MCF 10A (cell line): ENCODE measurements at regions of chr1 and their contacts with region 1.

Region 1: GRCh38 chr1:32107742-32108661 is at the start of gene KPNA6:
- DNase-seq: peak; percentile 98
- H3K4me3 Mint-ChIP-seq: peak within 1 kb of the TSS; percentile 98
- H3K27ac Mint-ChIP-seq: peak within 1 kb of the TSS; percentile 97
- H3K4me1 Mint-ChIP-seq: peaks cover 11% of the 10 kb centered on the region
- H3K27me3 Mint-ChIP-seq: no peaks in the 10 kb centered on the region
- CTCF ChIP-seq: no peak
- total RNA-seq, gene KPNA6: 86.9 and 109 TPM in 2 replicates

Region 2: GRCh38 chr1:32013386-32014198 is 94.4 kb before region 1 on chr1 and contains the start of gene KHDRBS1:
- CTCF ChIA-PET with region 1: no interaction called
- POLR2A ChIA-PET with region 1: interaction called, 19 read pairs
- intact Hi-C with region 1: no loop called
- DNase-seq: peak; percentile 97
- H3K4me3 Mint-ChIP-seq: peak within 1 kb of the TSS; percentile 98
- H3K27ac Mint-ChIP-seq: peak within 1 kb of the TSS; percentile 95
- H3K4me1 Mint-ChIP-seq: peaks cover 26% of the 10 kb centered on the region
- H3K27me3 Mint-ChIP-seq: no peaks in the 10 kb centered on the region
- CTCF ChIP-seq: no peak
- total RNA-seq, gene KHDRBS1: 106 and 107 TPM in 2 replicates

Region 3: DNA sequence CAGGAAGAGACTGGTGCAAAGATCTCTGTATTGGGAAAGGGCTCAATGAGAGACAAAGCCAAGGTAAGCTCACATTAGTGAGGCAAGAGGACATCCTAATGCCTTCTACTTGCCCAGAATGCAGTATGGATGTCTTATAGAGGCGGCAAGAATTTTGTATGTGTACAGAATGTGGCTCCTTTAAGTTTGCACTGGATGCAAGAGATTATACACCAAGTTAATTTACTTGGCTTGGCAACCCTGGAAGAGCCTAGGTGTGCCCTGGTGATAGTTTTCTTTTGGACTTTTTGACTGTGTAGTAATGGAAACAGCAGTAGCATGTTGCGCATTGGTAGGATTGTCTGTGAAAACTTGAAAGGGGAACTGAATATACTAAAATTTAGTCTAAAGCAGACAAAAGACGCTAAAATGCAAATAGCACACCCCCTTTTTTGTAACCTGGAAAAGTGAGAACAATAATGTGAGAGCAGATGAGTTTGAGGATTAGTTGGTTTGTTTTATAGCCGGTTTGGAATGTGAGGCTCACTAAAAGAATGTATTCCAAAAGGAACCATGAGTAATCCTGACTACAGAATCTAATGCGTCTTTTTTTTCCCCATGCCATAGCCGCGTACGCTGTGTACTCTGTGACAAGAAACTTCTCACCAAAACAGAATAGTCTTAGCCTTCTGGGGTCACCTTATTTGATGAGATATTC is 76.3 kb before region 1 on chr1:
- CTCF ChIA-PET with region 1: no interaction called
- POLR2A ChIA-PET with region 1: no interaction called
- intact Hi-C with region 1: no loop called
- DNase-seq: no peak
- H3K4me3 Mint-ChIP-seq: no peak overlapping the region
- H3K27ac Mint-ChIP-seq: no peak overlapping the region
- H3K4me1 Mint-ChIP-seq: peaks cover 25% of the 10 kb centered on the region
- H3K27me3 Mint-ChIP-seq: no peaks in the 10 kb centered on the region
- CTCF ChIP-seq: no peak

Region 4: DNA sequence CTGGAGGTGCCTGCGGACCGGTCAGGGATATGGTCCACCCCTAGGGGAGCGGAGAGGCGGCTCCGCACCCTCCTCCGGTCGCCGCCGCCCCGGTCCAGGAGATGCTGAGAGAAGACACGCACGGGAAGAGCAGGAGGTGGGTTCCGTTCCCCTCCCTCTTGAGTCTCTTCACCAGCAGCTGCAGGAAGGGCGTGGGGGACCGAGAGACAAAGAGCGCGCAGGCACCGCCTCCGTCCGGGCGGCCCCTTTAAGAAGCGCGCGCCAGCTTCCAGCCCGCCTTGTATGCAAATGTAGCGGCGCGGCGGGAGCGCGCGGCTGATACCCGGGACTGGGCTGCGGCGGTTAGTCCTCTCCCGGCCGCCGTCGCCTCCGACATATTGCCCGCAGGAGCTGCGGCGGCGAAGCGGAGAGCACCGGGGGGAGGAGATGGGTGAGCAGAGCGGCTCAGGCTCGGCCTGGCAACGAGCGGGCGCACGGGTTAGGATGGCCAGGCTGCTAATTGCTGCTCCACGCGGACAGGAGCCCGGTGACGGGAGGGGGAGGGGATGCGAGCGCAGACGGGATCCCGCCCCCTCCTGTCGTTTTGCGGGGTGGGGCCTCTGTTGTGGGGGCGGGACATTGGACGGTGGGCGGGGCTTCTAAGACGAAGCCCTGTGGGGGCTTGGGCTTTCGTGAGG is 35.2 kb before region 1 on chr1 and contains the start of gene TMEM39B:
- CTCF ChIA-PET with region 1: interaction called, 5 read pairs
- POLR2A ChIA-PET with region 1: interaction called, 60 read pairs
- intact Hi-C with region 1: loop called (anchors 2 kb)
- DNase-seq: peak; percentile 93
- H3K4me3 Mint-ChIP-seq: peak within 1 kb of the TSS; percentile 91
- H3K27ac Mint-ChIP-seq: peak within 1 kb of the TSS; percentile 85
- H3K4me1 Mint-ChIP-seq: peaks cover 23% of the 10 kb centered on the region
- H3K27me3 Mint-ChIP-seq: no peaks in the 10 kb centered on the region
- CTCF ChIP-seq: no peak
- total RNA-seq, gene TMEM39B: 15.0 and 22.3 TPM in 2 replicates

Region 5: DNA sequence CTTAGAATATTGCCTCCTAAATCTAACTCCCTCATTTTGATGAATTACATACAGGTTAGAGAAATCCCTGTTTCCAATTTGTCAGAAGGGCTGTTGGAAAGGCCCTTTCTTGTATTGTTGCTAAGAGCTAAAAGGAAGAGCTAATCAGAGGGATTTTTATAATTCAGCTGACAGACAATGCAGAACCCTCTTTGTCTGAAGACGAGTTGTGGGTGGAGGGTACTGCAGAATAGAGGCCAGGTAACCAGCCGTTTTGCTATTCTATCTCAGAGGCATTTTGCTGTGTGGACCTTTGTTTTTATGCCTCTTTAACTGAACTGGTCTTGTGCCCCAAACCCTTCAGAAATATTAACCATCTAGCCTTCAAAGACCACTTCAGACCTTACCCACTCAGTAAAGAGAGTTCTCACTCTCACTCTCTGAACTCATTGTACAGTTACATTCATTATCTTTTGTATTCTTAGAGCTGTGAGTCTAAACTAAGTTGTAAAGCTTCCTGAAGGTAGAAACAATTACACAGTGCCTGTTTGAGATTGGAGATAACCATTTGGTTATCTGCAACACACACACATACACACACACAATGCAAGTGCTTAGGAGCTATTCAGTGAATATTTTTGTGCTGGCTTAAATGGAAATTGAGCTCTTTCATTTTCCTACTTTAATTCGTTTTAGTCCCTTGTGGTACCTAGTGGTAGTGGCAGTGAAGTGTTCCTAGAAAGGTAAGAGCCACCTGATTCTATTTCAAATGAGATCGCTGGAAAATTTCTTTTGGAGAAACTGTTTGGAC is 19.6 kb after region 1 on chr1:
- CTCF ChIA-PET with region 1: interaction called, 6 read pairs
- POLR2A ChIA-PET with region 1: interaction called, 3 read pairs
- intact Hi-C with region 1: loop called (anchors 2 kb)
- DNase-seq: no peak
- H3K4me3 Mint-ChIP-seq: no peak overlapping the region
- H3K27ac Mint-ChIP-seq: no peak overlapping the region
- H3K4me1 Mint-ChIP-seq: peaks cover 20% of the 10 kb centered on the region
- H3K27me3 Mint-ChIP-seq: no peaks in the 10 kb centered on the region
- CTCF ChIP-seq: no peak

Region 6: DNA sequence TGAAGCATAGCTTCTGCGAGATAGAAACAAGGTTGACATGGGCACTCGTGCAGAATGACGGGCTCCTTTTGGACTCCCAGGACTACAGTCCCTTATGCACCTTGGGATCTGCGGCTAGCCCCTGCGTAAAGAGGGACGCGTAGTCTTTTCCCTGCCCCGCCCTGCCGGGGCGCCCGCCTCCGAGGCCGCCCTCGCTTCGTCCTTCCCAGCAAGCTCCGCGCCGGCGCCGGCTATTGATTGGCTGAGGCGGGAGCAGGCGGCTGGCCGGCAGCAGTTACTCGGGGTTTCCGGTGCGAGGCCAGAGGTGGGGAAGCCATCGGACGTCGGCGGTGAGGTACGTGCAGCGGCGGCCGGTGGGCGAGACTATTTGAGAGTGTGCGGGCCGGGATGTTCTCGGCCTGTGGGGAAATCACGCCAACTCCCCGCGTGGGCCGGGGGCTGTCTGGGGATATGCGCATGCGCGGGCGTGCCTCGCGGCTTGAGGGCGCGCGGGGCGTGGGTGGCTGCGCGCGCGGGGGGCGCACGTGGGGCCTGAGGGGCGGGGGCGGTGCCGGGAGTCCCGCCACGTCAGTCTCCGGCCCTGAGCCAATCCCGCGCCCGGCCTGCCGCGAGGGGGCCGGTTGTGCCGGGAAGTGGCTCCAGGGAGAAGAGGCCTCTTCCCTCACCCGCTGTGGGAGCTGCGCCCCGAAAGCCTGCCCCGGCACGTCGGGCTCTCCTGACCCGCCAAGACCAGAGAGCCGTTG is 71.6 kb after region 1 on chr1 and contains the start of gene TXLNA:
- CTCF ChIA-PET with region 1: interaction called, 4 read pairs
- POLR2A ChIA-PET with region 1: interaction called, 44 read pairs
- intact Hi-C with region 1: loop called (anchors 2 kb)
- DNase-seq: peak; percentile 92
- H3K4me3 Mint-ChIP-seq: peak within 1 kb of the TSS; percentile 97
- H3K27ac Mint-ChIP-seq: peak within 1 kb of the TSS; percentile 98
- H3K4me1 Mint-ChIP-seq: peaks cover 15% of the 10 kb centered on the region
- H3K27me3 Mint-ChIP-seq: no peaks in the 10 kb centered on the region
- CTCF ChIP-seq: no peak
- total RNA-seq, gene TXLNA: 61.8 and 64.8 TPM in 2 replicates